IMR-90 (cell line): ENCODE measurements at regions of chrX and their contacts with region 1.

Region 1: GRCh38 chrX:131792789-131793462 is 230.2 kb upstream of the STK26 start:
- DNase-seq: peak; percentile 93
- ATAC-seq: peak; percentile 86
- H3K4me3 ChIP-seq: peak overlapping the region; percentile 47
- H3K27ac ChIP-seq: peak overlapping the region; percentile 69; the same call in 1 of the 2 replicates
- H3K4me1 ChIP-seq: no peaks in the 10 kb centered on the region
- H3K27me3 ChIP-seq: peaks cover 7% of the 10 kb centered on the region
- CTCF ChIP-seq: peak; percentile 66
- POLR2A ChIP-seq: no peak
- RAD21 ChIP-seq: peak; percentile 76

Region 2: GRCh38 chrX:131710431-131711045 is 82.4 kb before region 1 on chrX:
- CTCF ChIA-PET with region 1: no interaction called
- POLR2A ChIA-PET with region 1: no interaction called
- dilution Hi-C with region 1: no loop called
- in situ Hi-C with region 1: no loop called
- intact Hi-C with region 1: loop called (anchors 1 kb)
- DNase-seq: no peak
- ATAC-seq: no peak; the same call in 1 of the 2 replicates
- H3K4me3 ChIP-seq: peak overlapping the region; percentile 12; the same call in 1 of the 2 replicates
- H3K27ac ChIP-seq: no peak overlapping the region
- H3K4me1 ChIP-seq: no peaks in the 10 kb centered on the region
- H3K27me3 ChIP-seq: no peaks in the 10 kb centered on the region
- CTCF ChIP-seq: no peak
- POLR2A ChIP-seq: no peak
- RAD21 ChIP-seq: no peak

Region 3: GRCh38 chrX:131746474-131746968 is 46.4 kb before region 1 on chrX:
- CTCF ChIA-PET with region 1: no interaction called
- POLR2A ChIA-PET with region 1: no interaction called
- dilution Hi-C with region 1: no loop called
- in situ Hi-C with region 1: no loop called
- intact Hi-C with region 1: loop called (anchors 1 kb)
- DNase-seq: peak; percentile 86
- ATAC-seq: peak; percentile 73
- H3K4me3 ChIP-seq: peak overlapping the region; percentile 60
- H3K27ac ChIP-seq: peak overlapping the region; percentile 95
- H3K4me1 ChIP-seq: no peaks in the 10 kb centered on the region
- H3K27me3 ChIP-seq: no peaks in the 10 kb centered on the region
- CTCF ChIP-seq: peak; percentile 64
- POLR2A ChIP-seq: no peak
- RAD21 ChIP-seq: peak; percentile 69

Region 4: DNA sequence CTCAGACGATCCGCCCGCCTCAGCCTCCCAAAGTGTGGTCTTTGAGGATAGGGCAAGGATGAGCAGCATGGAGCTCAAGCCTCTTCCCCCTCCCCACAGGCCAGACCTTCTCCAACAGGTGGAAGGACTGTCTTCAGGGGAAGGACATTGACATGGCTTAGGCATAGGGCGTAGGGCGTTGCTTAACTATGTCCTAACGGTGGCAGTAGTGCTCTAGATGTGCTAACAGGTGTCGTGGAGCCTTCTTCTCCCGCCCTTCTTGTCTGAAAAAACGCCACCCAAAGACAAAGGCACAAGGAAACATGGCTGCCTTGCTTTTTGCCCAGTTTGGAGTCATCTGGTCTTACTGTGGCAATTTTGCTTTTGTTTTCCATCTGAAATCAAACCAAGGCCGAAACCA is 29.3 kb before region 1 on chrX:
- CTCF ChIA-PET with region 1: no interaction called
- POLR2A ChIA-PET with region 1: no interaction called
- dilution Hi-C with region 1: no loop called
- in situ Hi-C with region 1: no loop called
- intact Hi-C with region 1: loop called (anchors 1 kb)
- DNase-seq: peak; percentile 85
- ATAC-seq: peak; percentile 66
- H3K4me3 ChIP-seq: peak overlapping the region; percentile 1; the same call in 1 of the 2 replicates
- H3K27ac ChIP-seq: no peak overlapping the region
- H3K4me1 ChIP-seq: no peaks in the 10 kb centered on the region
- H3K27me3 ChIP-seq: no peaks in the 10 kb centered on the region
- CTCF ChIP-seq: peak; percentile 68
- POLR2A ChIP-seq: no peak
- RAD21 ChIP-seq: peak; percentile 72